Caco-2 (cell line): ENCODE measurements at regions of chr13 and their contacts with region 1.

Region 1: GRCh38 chr13:59690857-59691500 is 472.7 kb downstream of the DIAPH3 start:
- DNase-seq: peak in 1 of 2 experiments; percentile 70
- H3K4me3 ChIP-seq: no peak overlapping the region
- H3K4me3 Mint-ChIP-seq: peak overlapping the region; percentile 29
- H3K27ac Mint-ChIP-seq: peak overlapping the region; percentile 54
- H3K4me1 ChIP-seq: peaks cover 94% of the 10 kb centered on the region
- H3K4me1 Mint-ChIP-seq: peaks cover 45% of the 10 kb centered on the region
- H3K27me3 ChIP-seq: no peaks in the 10 kb centered on the region
- H3K27me3 Mint-ChIP-seq: no peaks in the 10 kb centered on the region
- CTCF ChIP-seq: no peak

Region 2: GRCh38 chr13:59715611-59716010 is 24.6 kb after region 1 on chr13:
- CTCF ChIA-PET with region 1: no interaction called
- POLR2A ChIA-PET with region 1: interaction called, 3 read pairs
- intact Hi-C with region 1: loop called (anchors 1 kb)
- DNase-seq: peak in 1 of 2 experiments; percentile 60
- H3K4me3 ChIP-seq: no peak overlapping the region
- H3K4me3 Mint-ChIP-seq: no peak overlapping the region
- H3K27ac Mint-ChIP-seq: peak overlapping the region; percentile 72
- H3K4me1 ChIP-seq: peaks cover 82% of the 10 kb centered on the region
- H3K4me1 Mint-ChIP-seq: peaks cover 13% of the 10 kb centered on the region
- H3K27me3 ChIP-seq: no peaks in the 10 kb centered on the region
- H3K27me3 Mint-ChIP-seq: no peaks in the 10 kb centered on the region
- CTCF ChIP-seq: no peak

Region 3: DNA sequence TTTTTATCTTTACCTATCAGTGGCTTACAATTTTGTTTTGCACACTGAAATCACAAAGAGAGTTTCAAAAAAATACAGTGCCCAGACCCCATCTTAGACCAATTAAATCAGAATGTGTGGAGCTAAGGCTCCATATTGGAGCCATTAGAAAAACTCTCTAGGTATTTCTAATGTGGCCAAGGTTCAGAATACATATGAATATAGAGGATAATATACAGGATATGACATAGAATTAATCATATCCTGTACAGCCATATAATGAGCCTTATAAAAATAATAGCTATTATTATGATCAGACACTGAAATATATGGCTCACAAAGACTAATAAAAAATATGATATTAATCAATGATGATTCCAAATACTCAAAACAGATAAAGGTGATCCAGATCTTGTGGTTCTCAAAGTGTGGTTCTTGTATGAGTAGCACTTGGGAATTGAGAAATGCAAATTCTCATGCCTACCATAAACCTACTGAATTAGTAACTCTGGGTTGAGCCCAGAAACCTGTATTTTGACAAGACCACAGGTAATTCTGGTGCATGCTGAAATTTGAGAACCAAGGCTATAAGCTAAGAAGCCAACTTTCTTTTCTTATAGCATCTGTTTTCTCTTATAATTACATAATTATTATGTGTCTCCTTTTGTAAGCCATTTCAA is 64.8 kb after region 1 on chr13:
- CTCF ChIA-PET with region 1: no interaction called
- POLR2A ChIA-PET with region 1: no interaction called
- intact Hi-C with region 1: loop called (anchors 2 kb)
- DNase-seq: no peak
- H3K4me3 ChIP-seq: no peak overlapping the region
- H3K4me3 Mint-ChIP-seq: no peak overlapping the region
- H3K27ac Mint-ChIP-seq: peak overlapping the region; percentile 69
- H3K4me1 ChIP-seq: peaks cover 15% of the 10 kb centered on the region
- H3K4me1 Mint-ChIP-seq: peaks cover 15% of the 10 kb centered on the region
- H3K27me3 ChIP-seq: no peaks in the 10 kb centered on the region
- H3K27me3 Mint-ChIP-seq: no peaks in the 10 kb centered on the region
- CTCF ChIP-seq: no peak

Region 4: DNA sequence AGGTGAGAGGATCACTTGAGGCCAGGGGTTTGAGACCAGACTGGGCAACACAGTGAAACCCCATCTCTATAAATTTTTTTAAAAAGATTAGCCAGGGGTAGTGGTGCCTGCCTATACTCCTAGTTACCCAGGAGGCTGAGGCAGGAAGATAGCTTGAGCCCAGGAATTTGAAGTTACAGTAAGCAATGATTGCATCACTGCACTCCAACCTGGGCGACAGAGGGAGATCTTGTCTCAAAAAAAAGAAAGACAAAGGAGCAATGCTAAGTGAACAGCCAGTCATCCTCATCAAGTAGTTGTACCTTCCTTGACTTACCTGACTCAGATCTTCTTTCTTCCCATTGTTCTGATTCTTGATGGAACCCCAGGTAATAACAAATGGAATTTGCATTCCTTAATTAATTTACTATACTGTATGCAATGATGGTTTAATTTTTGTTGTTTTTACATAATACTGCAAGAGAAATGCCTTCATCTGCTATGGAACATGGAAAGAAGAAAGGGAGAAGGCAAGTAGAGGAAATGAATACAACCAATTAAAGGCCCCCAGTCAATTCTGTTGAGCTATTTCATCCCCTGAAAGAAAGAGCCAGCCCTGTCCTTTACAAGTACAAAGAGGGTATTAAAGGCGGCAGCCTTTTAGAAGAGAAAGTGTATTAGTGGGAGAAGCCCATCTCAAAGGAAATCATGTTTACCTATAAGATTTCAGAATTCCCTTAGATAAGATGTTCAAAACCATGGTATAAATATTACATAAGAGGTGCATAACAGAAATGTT is 156.1 kb after region 1 on chr13:
- CTCF ChIA-PET with region 1: no interaction called
- POLR2A ChIA-PET with region 1: no interaction called
- intact Hi-C with region 1: loop called (anchors 1 kb)
- DNase-seq: peak; percentile 24 to 43
- H3K4me3 ChIP-seq: no peak overlapping the region
- H3K4me3 Mint-ChIP-seq: no peak overlapping the region
- H3K27ac Mint-ChIP-seq: no peak overlapping the region
- H3K4me1 ChIP-seq: peaks cover 58% of the 10 kb centered on the region
- H3K4me1 Mint-ChIP-seq: peaks cover 55% of the 10 kb centered on the region
- H3K27me3 ChIP-seq: no peaks in the 10 kb centered on the region
- H3K27me3 Mint-ChIP-seq: no peaks in the 10 kb centered on the region
- CTCF ChIP-seq: no peak

Region 5: DNA sequence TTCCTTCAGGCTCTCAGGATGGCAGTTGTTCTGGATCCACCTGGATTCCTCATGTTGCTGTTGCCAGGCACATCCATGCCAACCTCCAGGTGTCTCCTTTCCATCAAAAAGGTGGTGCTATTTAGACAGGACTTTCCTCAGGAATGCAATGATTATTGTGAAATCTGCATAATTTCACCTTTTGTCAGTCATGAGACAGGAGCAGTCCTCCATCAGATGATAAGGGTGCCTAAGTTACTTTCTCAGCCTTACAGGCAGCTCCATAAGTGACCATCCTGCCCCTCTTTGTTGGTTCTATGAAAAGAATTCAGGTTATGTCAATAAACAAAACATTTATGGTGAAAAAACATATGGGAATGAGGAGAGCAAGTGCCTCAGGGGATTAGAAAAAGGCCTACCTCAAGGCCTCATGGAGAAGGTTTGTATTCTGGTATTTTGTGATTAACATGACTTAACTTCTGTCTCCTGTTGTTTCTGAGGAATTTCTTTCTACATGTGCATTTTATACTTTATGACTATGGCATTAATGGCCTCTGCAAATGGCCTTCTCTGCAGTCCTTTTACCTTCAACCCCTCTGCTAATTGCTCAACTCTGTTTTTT is 583.0 kb after region 1 on chr13:
- CTCF ChIA-PET with region 1: no interaction called
- POLR2A ChIA-PET with region 1: interaction called, 6 read pairs
- intact Hi-C with region 1: loop called (anchors 1 kb)
- DNase-seq: peak; percentile 72 to 79
- H3K4me3 ChIP-seq: no peak overlapping the region
- H3K4me3 Mint-ChIP-seq: peak overlapping the region; percentile 31
- H3K27ac Mint-ChIP-seq: peak overlapping the region; percentile 92
- H3K4me1 ChIP-seq: peaks cover 53% of the 10 kb centered on the region
- H3K4me1 Mint-ChIP-seq: peaks cover 33% of the 10 kb centered on the region
- H3K27me3 ChIP-seq: no peaks in the 10 kb centered on the region
- H3K27me3 Mint-ChIP-seq: no peaks in the 10 kb centered on the region
- CTCF ChIP-seq: no peak